ENCODE measurements at regions of chr3 and their contacts with region 1.

Region 1: DNA sequence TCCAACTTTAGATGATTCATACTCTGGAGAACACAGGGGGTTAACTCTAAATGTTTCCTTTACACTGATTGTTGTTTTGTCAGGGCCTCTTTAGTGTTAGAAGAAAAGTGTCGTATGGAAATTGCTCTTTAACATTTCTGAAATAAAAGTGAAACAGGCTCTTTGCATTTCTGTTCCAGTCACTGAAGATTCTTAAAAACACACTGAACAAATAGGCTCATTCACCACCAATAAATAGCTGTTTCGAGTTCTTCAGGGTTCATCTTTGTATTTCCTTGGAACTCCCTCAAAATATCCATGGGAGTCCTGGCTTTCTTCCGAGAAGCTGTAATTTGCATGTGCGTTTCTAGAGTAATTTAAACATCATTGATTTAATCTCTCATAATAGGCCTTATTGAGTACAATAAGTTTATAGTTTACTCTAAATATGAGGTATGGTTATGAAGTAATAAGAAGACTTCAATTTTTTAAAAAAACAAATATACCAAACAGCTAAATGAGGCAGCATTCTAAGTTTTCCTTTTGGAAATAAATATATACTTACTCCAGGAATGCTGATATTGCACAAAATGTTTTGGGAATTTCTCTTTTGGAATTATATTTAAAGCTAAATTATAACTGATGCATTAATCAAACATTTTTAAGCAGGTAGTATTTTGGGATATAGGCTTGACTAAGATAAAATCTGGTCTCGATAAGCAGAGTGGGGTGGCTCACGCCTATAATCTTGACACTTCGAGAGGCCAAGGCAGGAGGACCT is 327.4 kb downstream of the EPHA3 start:
- DNase-seq: peak; percentile 86
- H3K4me3 ChIP-seq: peak overlapping the region; percentile 12
- H3K27ac ChIP-seq: peak overlapping the region; percentile 20
- H3K4me1 ChIP-seq: peaks cover 10% of the 10 kb centered on the region
- H3K27me3 ChIP-seq: no peaks in the 10 kb centered on the region
- CTCF ChIP-seq: no peak

Region 2: DNA sequence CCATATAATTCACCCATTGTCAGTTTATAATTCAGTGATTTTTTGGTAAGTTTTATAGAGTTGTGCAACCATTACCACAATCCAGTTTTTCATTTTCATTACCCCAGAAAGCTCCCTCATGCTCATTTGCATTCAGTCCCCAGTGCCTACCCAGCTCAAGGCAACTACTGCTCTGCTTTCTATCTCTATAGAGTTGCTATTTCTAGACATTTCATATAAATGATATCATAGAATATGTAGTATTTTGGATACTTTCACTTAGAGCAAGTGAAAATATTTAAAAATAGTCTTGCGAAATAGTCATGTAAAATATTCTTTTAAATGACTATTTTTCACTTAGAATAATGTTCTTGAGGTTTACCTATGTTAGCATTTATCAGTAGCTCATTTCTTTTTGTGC is 1333.7 kb before region 1 on chr3:
- CTCF ChIA-PET with region 1: no interaction called
- POLR2A ChIA-PET with region 1: no interaction called
- intact Hi-C with region 1: no loop called
- DNase-seq: no peak
- H3K4me3 ChIP-seq: no peak overlapping the region
- H3K27ac ChIP-seq: no peak overlapping the region
- H3K4me1 ChIP-seq: no peaks in the 10 kb centered on the region
- H3K27me3 ChIP-seq: no peaks in the 10 kb centered on the region
- CTCF ChIP-seq: no peak

Region 3: GRCh38 chr3:89138048-89138447 is 296.8 kb before region 1 on chr3:
- CTCF ChIA-PET with region 1: no interaction called
- POLR2A ChIA-PET with region 1: no interaction called
- intact Hi-C with region 1: loop called (anchors 10 kb)
- DNase-seq: no peak
- H3K4me3 ChIP-seq: no peak overlapping the region
- H3K27ac ChIP-seq: no peak overlapping the region
- H3K4me1 ChIP-seq: peaks cover 8% of the 10 kb centered on the region
- H3K27me3 ChIP-seq: no peaks in the 10 kb centered on the region
- CTCF ChIP-seq: no peak

Measured in A673 (cell line).